Left cardiac atrium (tissue), 4 donors: ENCODE measurements at regions of chr16 and their contacts with region 1.

Region 1: GRCh38 chr16:19071811-19072777 is 4.7 kb downstream of the COQ7 start:
- DNase-seq: peak; percentile 45
- ATAC-seq: no peak

Region 2: GRCh38 chr16:18983565-18984424 is 88.3 kb before region 1 on chr16 and contains the start of gene TMC7:
- intact Hi-C with region 1: loop called in 1 of 2 experiments (anchors 1 kb)
- DNase-seq: peak; percentile 84
- ATAC-seq: peak; percentile 95 to 97
- total RNA-seq, gene TMC7: 0.85 to 1.2 TPM

Region 3: GRCh38 chr16:19252904-19253303 is 180.8 kb after region 1 on chr16:
- intact Hi-C with region 1: no loop called
- DNase-seq: no peak
- ATAC-seq: no peak